Right ventricle myocardium inferior (tissue), 1 donor: ENCODE measurements at regions of chr3 and their contacts with region 1.

Region 1: GRCh38 chr3:16600780-16601539 is 4.3 kb downstream of the DAZL start:
- DNase-seq: peak; percentile 89
- ATAC-seq: no peak

Region 2: GRCh38 chr3:16520970-16521881 is 79.7 kb before region 1 on chr3:
- intact Hi-C with region 1: no loop called
- DNase-seq: no peak
- ATAC-seq: no peak

Region 3: DNA sequence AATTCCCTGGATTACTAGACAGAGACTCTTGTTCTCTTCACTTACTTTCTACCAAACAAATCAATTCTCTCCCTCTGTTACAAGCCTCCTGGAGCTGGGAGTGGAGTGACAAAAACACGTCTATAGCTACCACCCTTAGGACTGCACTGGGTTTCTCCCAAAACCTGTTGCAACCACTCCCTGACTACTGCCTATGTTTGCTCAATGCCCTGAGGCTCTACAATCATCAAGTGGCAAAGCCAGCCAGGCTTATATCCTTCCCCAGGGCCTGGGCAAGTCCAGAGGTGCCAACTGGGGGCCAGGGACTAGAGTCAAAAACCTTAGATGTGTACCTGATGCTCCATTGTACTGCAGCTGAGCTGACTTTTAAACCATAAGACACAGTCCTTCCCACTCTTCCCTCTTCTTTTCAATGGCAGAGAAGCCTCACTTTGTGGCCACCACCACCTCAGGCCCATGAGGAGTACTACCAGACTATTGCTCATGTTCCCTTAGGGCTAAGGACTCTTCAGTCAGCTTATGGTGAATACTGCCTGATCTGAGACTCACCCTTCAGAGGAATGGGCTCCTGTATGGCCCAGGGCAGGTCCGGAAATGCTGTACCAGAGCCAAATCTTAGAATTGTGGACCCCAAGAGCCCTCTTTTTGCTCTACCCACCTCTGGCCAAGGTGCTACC is 158.4 kb after region 1 on chr3:
- intact Hi-C with region 1: loop called (anchors 10 kb)
- DNase-seq: no peak
- ATAC-seq: no peak

Region 4: GRCh38 chr3:17032407-17033034 is 431.6 kb after region 1 on chr3:
- intact Hi-C with region 1: loop called (anchors 10 kb)
- DNase-seq: no peak
- ATAC-seq: peak; percentile 50

Region 5: GRCh38 chr3:17140670-17141505 is 539.9 kb after region 1 on chr3:
- intact Hi-C with region 1: loop called (anchors 2 kb)
- DNase-seq: peak; percentile 71
- ATAC-seq: peak; percentile 72

Region 6: GRCh38 chr3:17233398-17233800 is 632.4 kb after region 1 on chr3:
- intact Hi-C with region 1: loop called (anchors 1 kb)
- DNase-seq: no peak
- ATAC-seq: peak; percentile 71

Region 7: GRCh38 chr3:17412950-17413530 is 812.1 kb after region 1 on chr3:
- intact Hi-C with region 1: loop called (anchors 10 kb)
- DNase-seq: no peak
- ATAC-seq: no peak